Spleen (tissue), 13 donors: ENCODE measurements at regions of chr2 and their contacts with region 1.

Region 1: DNA sequence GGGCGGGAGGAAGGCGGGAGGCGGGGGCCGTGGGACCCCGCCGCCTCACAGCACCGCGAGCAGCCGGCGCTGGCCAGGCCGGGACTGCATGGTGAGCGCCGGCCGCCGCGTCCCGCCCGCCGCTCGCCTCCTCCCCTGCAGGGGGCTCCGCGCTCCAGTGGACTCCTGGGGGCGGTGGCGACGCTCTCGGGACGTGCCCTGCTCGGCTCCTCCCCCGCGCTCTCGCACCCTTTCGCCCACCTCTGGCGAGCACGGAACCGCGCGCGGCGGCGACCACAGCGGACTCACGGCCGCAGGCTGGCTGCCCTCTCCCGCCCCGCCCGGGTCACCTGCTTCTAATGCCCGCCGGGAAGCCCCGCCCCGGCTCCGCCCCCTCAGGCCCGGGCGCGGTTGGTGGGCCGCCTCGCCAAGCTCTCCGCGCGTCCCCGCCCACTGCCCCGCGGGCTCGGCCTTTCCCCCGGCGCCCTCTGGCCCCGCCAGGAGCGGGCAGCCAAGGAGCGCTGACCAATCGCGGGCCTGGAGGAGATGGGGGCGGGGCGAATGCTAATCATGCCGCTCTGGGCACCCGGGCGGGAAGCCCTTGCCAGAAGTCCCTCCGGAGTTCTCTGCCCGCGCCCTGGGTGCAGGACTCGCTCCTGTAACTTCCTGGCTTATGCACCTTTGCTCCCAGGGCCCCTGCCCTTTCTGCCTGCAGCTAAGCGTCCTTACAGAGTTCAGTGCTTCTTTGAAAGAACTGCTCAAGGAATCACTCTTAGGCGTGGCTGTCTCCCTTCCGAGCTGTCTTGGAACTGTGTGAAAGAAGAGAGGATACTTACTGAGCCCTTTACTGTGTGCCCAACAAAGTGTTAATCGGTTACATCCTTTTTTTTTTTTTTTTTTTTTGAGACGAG is at the start of gene FZD5:
- DNase-seq: peak; percentile 99
- H3K4me3 ChIP-seq: peak within 1 kb of the TSS; percentile 71 to 89 (median 86)
- H3K27ac ChIP-seq: peak within 1 kb of the TSS; percentile 1 to 83 (median 77)
- H3K4me1 ChIP-seq: peaks cover 23 to 52% (median 49%) of the 10 kb centered on the region in 6 donors
- H3K27me3 ChIP-seq: peaks cover 0 to 22% (median 0%) of the 10 kb centered on the region in 7 donors
- CTCF ChIP-seq: peak in 8 of 11 experiments; percentile 47 to 74 (median 64)
- POLR2A ChIP-seq: peak in 2 of 3 donors; percentile 41 to 58
- total RNA-seq, gene FZD5: 4.0 to 11.4 (median 6.6) TPM

Region 2: GRCh38 chr2:207625018-207625907 is 144.6 kb before region 1 on chr2 and contains the start of gene METTL21A:
- intact Hi-C with region 1: no loop called
- DNase-seq: peak; percentile 98
- H3K4me3 ChIP-seq: peak within 1 kb of the TSS; percentile 73 to 94 (median 86)
- H3K27ac ChIP-seq: peak within 1 kb of the TSS; percentile 96 to 99 (median 98)
- H3K4me1 ChIP-seq: peaks cover 10 to 64% (median 53%) of the 10 kb centered on the region in 6 donors
- H3K27me3 ChIP-seq: no peaks in the 10 kb centered on the region
- CTCF ChIP-seq: peak; percentile 44 to 76 (median 65)
- POLR2A ChIP-seq: peak in 2 of 3 donors; percentile 38 to 47
- total RNA-seq, gene METTL21A: 18.8 to 43.6 (median 24.1) TPM

Region 3: GRCh38 chr2:207975921-207976320 is 206.1 kb after region 1 on chr2:
- intact Hi-C with region 1: loop called (anchors 5 kb)
- DNase-seq: no peak
- H3K4me3 ChIP-seq: no peak overlapping the region
- H3K27ac ChIP-seq: no peak overlapping the region
- H3K4me1 ChIP-seq: peaks cover 0 to 14% (median 4%) of the 10 kb centered on the region in 6 donors
- H3K27me3 ChIP-seq: no peaks in the 10 kb centered on the region
- CTCF ChIP-seq: no peak
- POLR2A ChIP-seq: no peak